Activated T-helper 1 cell treated with anti-CD3 and anti-CD28 coated beads, Interleukin-12 subunit alpha, Interleukin-12 subunit beta, Interleukin-2, Interleukin-4 antibody, amounts not matched to agents 30 ng/mL and 10 ng/mL and 1 ng/mL, durations not matched to agents 14 hours and 24 hours and 36 hours (primary cell): ENCODE measurements at regions of chr12 and their contacts with region 1.

Region 1: DNA sequence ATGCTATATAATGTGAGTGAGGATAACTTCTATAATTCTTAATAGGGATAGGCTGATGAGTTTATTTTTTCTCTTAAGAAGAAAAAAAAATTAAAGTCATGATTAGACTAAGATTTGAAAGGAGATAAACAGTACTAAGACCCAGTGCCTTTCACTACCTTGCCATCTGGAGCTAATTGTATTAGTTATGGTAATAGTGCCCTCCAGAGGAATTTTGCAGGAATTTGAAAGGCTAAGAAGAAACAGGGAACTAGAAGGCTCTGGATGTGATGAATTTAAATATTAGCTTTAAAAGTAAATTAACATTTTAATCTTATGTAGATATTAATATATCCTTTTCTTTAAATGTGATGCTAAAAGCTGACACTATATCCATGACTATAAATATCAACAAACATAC is 36.6 kb upstream of the PIK3C2G start:
- DNase-seq: no peak
- H3K4me3 Mint-ChIP-seq: no peak overlapping the region
- H3K27ac Mint-ChIP-seq: no peak overlapping the region
- H3K4me1 Mint-ChIP-seq: no peaks in the 10 kb centered on the region
- H3K27me3 Mint-ChIP-seq: no peaks in the 10 kb centered on the region

Region 2: GRCh38 chr12:17763366-17763765 is 461.4 kb before region 1 on chr12:
- intact Hi-C with region 1: no loop called
- DNase-seq: no peak
- H3K4me3 Mint-ChIP-seq: no peak overlapping the region
- H3K27ac Mint-ChIP-seq: no peak overlapping the region
- H3K4me1 Mint-ChIP-seq: no peaks in the 10 kb centered on the region
- H3K27me3 Mint-ChIP-seq: no peaks in the 10 kb centered on the region

Region 3: GRCh38 chr12:18158774-18159557 is 65.8 kb before region 1 on chr12:
- intact Hi-C with region 1: loop called (anchors 2 kb)
- DNase-seq: no peak
- H3K4me3 Mint-ChIP-seq: no peak overlapping the region
- H3K27ac Mint-ChIP-seq: no peak overlapping the region
- H3K4me1 Mint-ChIP-seq: no peaks in the 10 kb centered on the region
- H3K27me3 Mint-ChIP-seq: peaks cover 2% of the 10 kb centered on the region

Region 4: GRCh38 chr12:18261253-18261652 is 36.5 kb after region 1 on chr12 and contains the start of gene PIK3C2G:
- intact Hi-C with region 1: no loop called
- DNase-seq: no peak
- H3K4me3 Mint-ChIP-seq: no peak within 1 kb of the TSS
- H3K27ac Mint-ChIP-seq: no peak within 1 kb of the TSS
- H3K4me1 Mint-ChIP-seq: no peaks in the 10 kb centered on the region
- H3K27me3 Mint-ChIP-seq: no peaks in the 10 kb centered on the region
- total RNA-seq, gene PIK3C2G: not detected in 2 replicates